ENCODE measurements at regions of chr14 and their contacts with region 1.

Region 1: DNA sequence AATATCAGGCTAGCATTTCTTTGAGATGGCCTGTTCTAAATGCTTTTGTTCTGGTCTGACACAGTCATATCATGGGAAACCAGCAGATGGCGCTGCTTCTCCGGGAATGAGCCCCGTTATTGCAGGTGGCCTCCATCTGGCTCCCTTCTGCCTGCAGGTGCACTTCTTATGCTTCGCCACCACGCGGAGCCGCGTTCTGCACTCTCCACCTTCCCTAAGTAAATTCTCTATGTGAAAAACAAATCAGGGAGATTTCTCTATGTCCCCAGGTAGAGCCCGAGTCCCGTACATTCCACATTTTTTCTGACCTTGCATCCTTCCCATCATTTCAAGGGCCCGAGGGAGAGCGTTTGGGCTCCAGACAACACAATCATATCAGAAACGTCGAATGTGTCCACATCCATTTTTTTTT is 26.2 kb downstream of the GLRX5 start:
- DNase-seq: peak; percentile 87
- H3K4me3 ChIP-seq: peak overlapping the region in 1 of 2 experiments; percentile 40; a peak in 1 of 4 replicates
- H3K27ac ChIP-seq: no peak overlapping the region
- H3K4me1 ChIP-seq: no peaks in the 10 kb centered on the region; a peak in 1 of 4 replicates
- H3K27me3 ChIP-seq: no peaks in the 10 kb centered on the region
- CTCF ChIP-seq: peak; percentile 98
- EP300 ChIP-seq: no peak
- RAD21 ChIP-seq: peak; percentile 97

Region 2: GRCh38 chr14:95549656-95550585 is 11.1 kb before region 1 on chr14:
- CTCF ChIA-PET with region 1: interaction called, 12 read pairs
- POLR2A ChIA-PET with region 1: interaction called, 3 read pairs
- DNase-seq: no peak
- H3K4me3 ChIP-seq: no peak overlapping the region
- H3K27ac ChIP-seq: no peak overlapping the region
- H3K4me1 ChIP-seq: peaks cover 0 to 10% of the 10 kb centered on the region in 2 experiments; a peak in 3 of 4 replicates
- H3K27me3 ChIP-seq: no peaks in the 10 kb centered on the region
- CTCF ChIP-seq: no peak
- EP300 ChIP-seq: no peak
- RAD21 ChIP-seq: no peak

Region 3: DNA sequence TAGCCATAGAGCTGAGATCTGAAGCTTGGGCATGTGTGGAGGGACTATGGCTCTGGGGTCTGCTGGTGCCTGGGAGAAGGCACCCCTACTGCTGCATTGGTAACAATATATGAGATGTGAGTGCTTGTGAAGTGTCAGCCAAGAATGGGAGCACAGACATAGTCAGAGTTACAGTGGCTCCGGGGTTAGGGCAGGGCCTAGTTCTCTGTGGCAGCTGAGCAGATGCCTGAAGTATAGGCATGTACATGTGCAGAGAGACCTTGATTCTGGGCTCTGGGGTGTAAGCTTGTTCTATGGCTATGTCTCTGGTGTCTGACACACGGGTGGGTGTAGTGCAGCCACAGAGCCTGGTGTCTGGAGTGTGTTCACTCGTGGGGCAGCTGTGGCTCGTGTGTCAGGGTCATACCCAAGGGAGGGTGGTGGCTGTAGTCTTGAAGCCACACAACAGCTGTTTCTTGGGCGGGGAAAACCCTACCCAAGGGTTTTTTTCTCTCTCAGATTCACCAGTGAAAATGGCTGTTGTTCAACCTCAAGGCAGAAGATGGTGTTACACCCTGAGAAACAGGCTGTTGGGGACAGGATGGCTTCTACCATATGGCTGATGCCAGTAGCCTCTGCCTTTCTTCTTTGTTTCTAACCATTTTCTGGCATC is 164.8 kb after region 1 on chr14:
- CTCF ChIA-PET with region 1: no interaction called
- POLR2A ChIA-PET with region 1: no interaction called
- DNase-seq: no peak
- H3K4me3 ChIP-seq: no peak overlapping the region
- H3K27ac ChIP-seq: no peak overlapping the region
- H3K4me1 ChIP-seq: no peaks in the 10 kb centered on the region
- H3K27me3 ChIP-seq: no peaks in the 10 kb centered on the region
- CTCF ChIP-seq: no peak
- EP300 ChIP-seq: no peak
- RAD21 ChIP-seq: no peak

Region 4: GRCh38 chr14:95979339-95980042 is 418.5 kb after region 1 on chr14:
- CTCF ChIA-PET with region 1: interaction called, 10 read pairs
- POLR2A ChIA-PET with region 1: no interaction called
- DNase-seq: peak; percentile 44
- H3K4me3 ChIP-seq: no peak overlapping the region
- H3K27ac ChIP-seq: no peak overlapping the region
- H3K4me1 ChIP-seq: no peaks in the 10 kb centered on the region
- H3K27me3 ChIP-seq: no peaks in the 10 kb centered on the region
- CTCF ChIP-seq: peak; percentile 39
- EP300 ChIP-seq: no peak
- RAD21 ChIP-seq: peak; percentile 54

Measured in SK-N-SH (cell line).